ENCODE measurements at regions of chr11 and their contacts with region 1.

Region 1: DNA sequence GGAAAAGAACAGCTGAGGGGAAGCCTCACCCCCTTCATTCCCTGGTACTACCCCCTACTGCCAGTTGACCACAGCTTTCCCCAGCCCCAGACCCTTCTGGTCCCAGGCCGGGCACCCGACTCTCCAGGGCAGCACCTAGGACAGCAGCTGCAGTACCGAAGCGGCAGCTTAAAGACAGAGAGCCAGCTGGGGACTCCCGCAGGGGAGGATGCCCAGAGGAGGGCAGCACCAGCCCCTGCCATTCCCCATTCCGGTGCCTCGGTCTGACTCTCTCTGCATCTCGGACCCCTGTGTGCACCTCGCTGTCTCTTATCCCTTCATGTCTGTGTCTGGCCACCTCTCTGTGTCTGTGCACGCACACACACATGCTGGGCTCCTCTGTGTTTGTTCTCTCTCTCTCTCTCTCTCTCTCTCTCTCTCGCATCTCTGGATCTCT is 9.4 kb downstream of the IGSF9B start:
- DNase-seq: peak; percentile 83
- H3K4me3 Mint-ChIP-seq: peak overlapping the region; percentile 33
- H3K27ac Mint-ChIP-seq: peak overlapping the region; percentile 42
- H3K4me1 Mint-ChIP-seq: peaks cover 67% of the 10 kb centered on the region
- H3K27me3 Mint-ChIP-seq: no peaks in the 10 kb centered on the region

Region 2: GRCh38 chr11:134331354-134332188 is 384.2 kb after region 1 on chr11 and contains the start of gene GLB1L2:
- CTCF ChIA-PET with region 1: no interaction called
- POLR2A ChIA-PET with region 1: no interaction called
- intact Hi-C with region 1: loop called (anchors 5 kb)
- DNase-seq: peak; percentile 82
- H3K4me3 Mint-ChIP-seq: peak within 1 kb of the TSS; percentile 67
- H3K27ac Mint-ChIP-seq: no peak within 1 kb of the TSS
- H3K4me1 Mint-ChIP-seq: peaks cover 10% of the 10 kb centered on the region
- H3K27me3 Mint-ChIP-seq: peaks cover 20% of the 10 kb centered on the region
- total RNA-seq, gene GLB1L2: 3.8 to 4.1 TPM